ENCODE measurements at regions of chr2 and their contacts with region 1.

Region 1: GRCh38 chr2:21118302-21118920 is 5.4 kb upstream of the TDRD15 start:
- DNase-seq: no peak
- H3K4me3 Mint-ChIP-seq: no peak overlapping the region
- H3K27ac Mint-ChIP-seq: no peak overlapping the region
- H3K4me1 Mint-ChIP-seq: no peaks in the 10 kb centered on the region
- H3K27me3 Mint-ChIP-seq: no peaks in the 10 kb centered on the region

Region 2: GRCh38 chr2:20661067-20661980 is 457.1 kb before region 1 on chr2:
- intact Hi-C with region 1: loop called (anchors 10 kb)
- DNase-seq: peak; percentile 55
- H3K4me3 Mint-ChIP-seq: no peak overlapping the region
- H3K27ac Mint-ChIP-seq: no peak overlapping the region
- H3K4me1 Mint-ChIP-seq: no peaks in the 10 kb centered on the region
- H3K27me3 Mint-ChIP-seq: peaks cover 66% of the 10 kb centered on the region

Region 3: GRCh38 chr2:21042958-21043743 is 75.3 kb before region 1 on chr2:
- intact Hi-C with region 1: loop called (anchors 1 kb)
- DNase-seq: peak; percentile 17
- H3K4me3 Mint-ChIP-seq: no peak overlapping the region
- H3K27ac Mint-ChIP-seq: no peak overlapping the region
- H3K4me1 Mint-ChIP-seq: peaks cover 3% of the 10 kb centered on the region
- H3K27me3 Mint-ChIP-seq: peaks cover 8% of the 10 kb centered on the region

Measured in activated T-helper 2 cell treated with anti-CD3 and anti-CD28 coated beads, Interferon-gamma antibody, Interleukin-2, Interleukin-4, amounts not matched to agents 10 μg/mL and 5 μg/mL and 100 μg/mL, durations not matched to agents 14 hours and 24 hours and 36 hours (primary cell).